ENCODE measurements at regions of chr12 and their contacts with region 1.

Region 1: GRCh38 chr12:84148335-84148734 is 764.3 kb downstream of the SLC6A15 start:
- DNase-seq: no peak
- ATAC-seq: no peak
- H3K4me3 ChIP-seq: no peak overlapping the region
- H3K27ac ChIP-seq: no peak overlapping the region
- H3K4me1 ChIP-seq: no peaks in the 10 kb centered on the region
- H3K27me3 ChIP-seq: no peaks in the 10 kb centered on the region
- CTCF ChIP-seq: no peak
- POLR2A ChIP-seq: no peak
- RAD21 ChIP-seq: no peak

Region 2: DNA sequence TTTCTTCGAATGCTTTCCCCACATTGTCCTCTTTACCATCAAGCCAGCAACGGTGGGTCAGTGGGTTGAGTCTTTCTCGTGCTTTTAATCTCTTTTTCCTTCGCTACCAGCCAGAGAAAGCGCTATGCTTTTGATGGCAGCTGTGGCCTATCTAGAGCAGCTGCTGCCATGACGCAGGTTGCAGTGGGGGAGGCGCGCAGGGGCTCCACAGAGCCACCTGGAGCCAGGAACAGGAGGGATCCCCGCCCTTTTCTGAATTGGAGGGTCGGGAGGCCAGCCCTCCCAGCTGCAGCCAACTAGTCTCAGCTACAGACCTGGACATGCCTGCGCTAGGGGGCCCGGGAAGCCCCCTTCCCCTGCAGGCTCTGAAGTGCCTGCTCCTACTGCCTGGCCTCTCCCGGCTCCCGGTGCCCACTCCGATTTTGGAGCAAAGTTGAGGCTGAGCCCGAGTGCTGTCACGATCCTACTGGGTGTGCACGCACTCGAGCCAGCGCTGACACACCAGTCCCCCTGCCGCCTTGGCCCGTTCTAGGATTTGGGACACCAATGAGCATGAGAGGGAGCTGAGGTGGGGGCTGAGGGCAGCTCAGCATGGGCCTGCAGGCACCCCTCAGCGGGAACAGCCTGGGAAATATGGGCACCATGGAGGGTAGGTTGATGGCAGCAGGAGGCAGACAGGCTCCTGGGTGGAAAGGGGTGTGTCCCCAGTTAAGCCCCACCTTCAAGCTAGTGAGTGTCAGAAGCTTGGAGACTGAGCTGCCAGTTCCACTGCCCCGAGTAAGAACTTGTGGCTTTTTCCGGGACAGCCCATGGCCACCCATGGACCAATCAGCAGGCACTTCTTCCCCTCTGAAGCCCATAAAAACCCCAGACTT is 20.0 kb before region 1 on chr12:
- CTCF ChIA-PET with region 1: no interaction called
- POLR2A ChIA-PET with region 1: no interaction called
- dilution Hi-C with region 1: no loop called
- in situ Hi-C with region 1: no loop called
- intact Hi-C with region 1: no loop called
- DNase-seq: no peak
- ATAC-seq: no peak
- H3K4me3 ChIP-seq: no peak overlapping the region
- H3K27ac ChIP-seq: no peak overlapping the region
- H3K4me1 ChIP-seq: peaks cover 2% of the 10 kb centered on the region; the same call in 1 of the 2 replicates
- H3K27me3 ChIP-seq: no peaks in the 10 kb centered on the region
- CTCF ChIP-seq: no peak
- POLR2A ChIP-seq: no peak
- RAD21 ChIP-seq: no peak

Region 3: DNA sequence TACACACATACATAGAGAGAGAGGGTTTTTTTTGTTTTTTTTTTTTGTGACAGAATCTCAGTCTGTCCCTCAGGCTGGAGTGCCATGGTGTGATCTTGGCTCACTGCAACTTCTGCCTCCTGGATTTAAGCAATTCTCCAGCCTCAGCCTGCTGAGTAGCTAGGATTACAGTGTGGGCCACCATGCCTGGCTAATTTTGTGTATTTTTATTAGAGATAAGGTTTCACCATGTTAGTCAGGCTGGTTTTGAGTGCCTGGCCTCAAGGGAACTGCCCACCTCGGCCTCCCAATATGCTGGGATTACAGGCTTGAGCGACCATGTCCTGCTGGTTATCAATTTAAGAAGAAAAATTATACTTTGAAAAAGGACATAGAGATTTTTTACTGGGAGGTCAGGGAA is 53.6 kb after region 1 on chr12:
- CTCF ChIA-PET with region 1: no interaction called
- POLR2A ChIA-PET with region 1: no interaction called
- dilution Hi-C with region 1: no loop called
- in situ Hi-C with region 1: no loop called
- intact Hi-C with region 1: loop called (anchors 10 kb)
- DNase-seq: peak; percentile 4
- ATAC-seq: peak; percentile 71
- H3K4me3 ChIP-seq: no peak overlapping the region
- H3K27ac ChIP-seq: no peak overlapping the region
- H3K4me1 ChIP-seq: no peaks in the 10 kb centered on the region
- H3K27me3 ChIP-seq: no peaks in the 10 kb centered on the region
- CTCF ChIP-seq: no peak
- POLR2A ChIP-seq: no peak
- RAD21 ChIP-seq: no peak

Region 4: DNA sequence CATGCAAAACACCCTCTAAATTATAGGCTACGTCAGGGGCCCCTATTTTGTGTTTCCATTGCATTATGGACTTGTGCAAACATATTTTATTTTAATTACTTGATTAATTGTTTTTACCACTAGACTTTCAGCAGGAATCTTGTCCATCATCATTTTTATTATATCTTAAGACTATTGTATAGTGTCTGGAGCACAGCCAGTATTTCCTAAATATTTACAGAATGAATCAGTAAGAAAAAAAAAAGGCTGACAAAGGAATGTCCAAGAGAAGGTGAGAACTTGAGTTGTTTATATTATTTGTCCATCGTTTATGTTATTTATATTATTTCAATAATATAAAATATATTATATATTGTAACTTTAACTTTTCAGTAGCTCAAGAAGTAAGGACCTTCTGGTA is 99.6 kb after region 1 on chr12:
- CTCF ChIA-PET with region 1: no interaction called
- POLR2A ChIA-PET with region 1: no interaction called
- dilution Hi-C with region 1: no loop called
- in situ Hi-C with region 1: no loop called
- intact Hi-C with region 1: no loop called
- DNase-seq: no peak
- ATAC-seq: no peak
- H3K4me3 ChIP-seq: no peak overlapping the region
- H3K27ac ChIP-seq: no peak overlapping the region
- H3K4me1 ChIP-seq: no peaks in the 10 kb centered on the region
- H3K27me3 ChIP-seq: no peaks in the 10 kb centered on the region
- CTCF ChIP-seq: no peak
- POLR2A ChIP-seq: no peak
- RAD21 ChIP-seq: no peak

Region 5: GRCh38 chr12:84745127-84745526 is 596.8 kb after region 1 on chr12:
- CTCF ChIA-PET with region 1: no interaction called
- POLR2A ChIA-PET with region 1: no interaction called
- dilution Hi-C with region 1: no loop called
- in situ Hi-C with region 1: no loop called
- intact Hi-C with region 1: no loop called
- DNase-seq: no peak
- ATAC-seq: no peak
- H3K4me3 ChIP-seq: no peak overlapping the region
- H3K27ac ChIP-seq: no peak overlapping the region
- H3K4me1 ChIP-seq: no peaks in the 10 kb centered on the region
- H3K27me3 ChIP-seq: no peaks in the 10 kb centered on the region
- CTCF ChIP-seq: no peak
- POLR2A ChIP-seq: no peak
- RAD21 ChIP-seq: no peak

Measured in IMR-90 (cell line).